ENCODE measurements at regions of chr11 and their contacts with region 1.

Region 1: GRCh38 chr11:68354148-68354872 is 41.9 kb downstream of the LRP5 start:
- DNase-seq: no peak
- H3K4me3 ChIP-seq: no peak overlapping the region
- H3K27ac ChIP-seq: peak overlapping the region; percentile 27; the same call in 1 of the 2 replicates
- H3K4me1 ChIP-seq: peaks cover 0 to 13% (median 7%) of the 10 kb centered on the region in 4 experiments; a peak in 6 of 7 replicates
- H3K27me3 ChIP-seq: no peaks in the 10 kb centered on the region
- CTCF ChIP-seq: no peak
- EP300 ChIP-seq: no peak
- POLR2A ChIP-seq: no peak
- RAD21 ChIP-seq: no peak

Region 2: DNA sequence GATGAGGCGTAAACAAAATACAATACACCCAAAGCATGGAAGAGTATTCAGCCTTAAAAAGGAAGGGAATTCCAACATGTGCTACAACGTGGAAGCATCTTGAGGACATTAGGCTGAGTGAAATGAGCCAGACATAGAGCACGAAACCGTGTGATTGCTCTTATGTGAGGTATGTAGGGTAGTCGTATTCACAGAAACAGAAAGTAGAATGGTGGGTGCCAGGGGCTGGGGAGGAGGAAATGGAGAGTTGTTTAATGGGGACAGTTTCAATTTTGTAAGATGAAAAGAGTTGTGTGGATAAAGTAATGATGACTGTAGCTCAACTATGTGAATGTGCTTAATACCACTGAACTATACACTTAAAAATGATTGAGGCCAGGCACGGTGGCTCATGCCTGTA is 131.0 kb before region 1 on chr11:
- CTCF ChIA-PET with region 1: no interaction called
- POLR2A ChIA-PET with region 1: no interaction called
- DNase-seq: no peak
- H3K4me3 ChIP-seq: no peak overlapping the region
- H3K27ac ChIP-seq: no peak overlapping the region
- H3K4me1 ChIP-seq: no peaks in the 10 kb centered on the region
- H3K27me3 ChIP-seq: peaks cover 0 to 2% (median 0%) of the 10 kb centered on the region in 4 experiments; a peak in 1 of 7 replicates
- CTCF ChIP-seq: no peak
- EP300 ChIP-seq: no peak
- POLR2A ChIP-seq: no peak
- RAD21 ChIP-seq: no peak

Region 3: DNA sequence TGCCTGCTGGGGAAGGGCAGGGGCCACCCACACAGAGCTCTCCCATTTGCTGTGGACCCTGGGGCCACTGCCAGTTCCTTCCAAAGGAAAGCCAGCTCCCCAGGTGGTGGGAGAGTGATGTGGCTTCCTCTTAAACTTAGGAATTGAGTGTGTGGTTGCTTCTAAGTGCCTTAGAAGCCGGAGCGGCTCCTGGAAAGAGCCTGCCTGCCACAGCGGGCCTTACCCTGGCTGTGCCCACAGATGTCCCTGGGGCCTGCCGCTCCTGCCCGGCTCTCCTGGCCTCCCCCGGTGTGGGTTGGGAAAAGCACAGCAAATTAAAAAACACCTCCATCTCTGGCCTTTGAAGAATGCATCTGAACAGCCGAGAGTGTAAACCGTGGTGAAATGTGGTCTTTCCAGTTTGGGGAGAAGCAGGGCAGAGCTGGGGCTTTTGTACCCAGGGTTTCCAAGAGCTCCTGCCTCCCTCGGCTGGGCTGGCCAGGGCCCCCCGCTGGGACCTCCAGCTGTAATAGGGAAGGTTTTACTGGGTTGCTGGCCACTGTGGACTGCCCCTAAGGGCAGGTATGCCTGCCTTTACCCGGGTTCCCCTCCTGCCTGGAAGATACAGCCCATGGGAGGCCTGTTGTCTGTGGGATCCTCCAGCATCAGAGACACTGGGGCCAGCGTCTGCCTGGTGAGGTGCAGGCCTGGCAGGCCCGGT is 11.7 kb before region 1 on chr11:
- CTCF ChIA-PET with region 1: interaction called, 9 read pairs
- POLR2A ChIA-PET with region 1: interaction called, 10 read pairs
- DNase-seq: peak; percentile 29 to 79
- H3K4me3 ChIP-seq: peak overlapping the region in 2 of 4 experiments; percentile 14 to 16; a peak in 1 of 8 replicates
- H3K27ac ChIP-seq: peak overlapping the region; percentile 77
- H3K4me1 ChIP-seq: peaks cover 11 to 33% (median 26%) of the 10 kb centered on the region in 4 experiments
- H3K27me3 ChIP-seq: no peaks in the 10 kb centered on the region
- CTCF ChIP-seq: no peak
- EP300 ChIP-seq: no peak
- POLR2A ChIP-seq: no peak
- RAD21 ChIP-seq: no peak

Region 4: GRCh38 chr11:68383976-68384501 is 29.7 kb after region 1 on chr11:
- CTCF ChIA-PET with region 1: interaction called, 19 read pairs
- POLR2A ChIA-PET with region 1: no interaction called
- DNase-seq: peak; percentile 33 to 98
- H3K4me3 ChIP-seq: no peak overlapping the region
- H3K27ac ChIP-seq: no peak overlapping the region
- H3K4me1 ChIP-seq: no peaks in the 10 kb centered on the region
- H3K27me3 ChIP-seq: no peaks in the 10 kb centered on the region
- CTCF ChIP-seq: peak; percentile 93 to 96 (median 93)
- EP300 ChIP-seq: no peak
- POLR2A ChIP-seq: no peak
- RAD21 ChIP-seq: peak; percentile 94 to 97

Region 5: GRCh38 chr11:68517121-68517741 is 162.9 kb after region 1 on chr11:
- CTCF ChIA-PET with region 1: no interaction called
- POLR2A ChIA-PET with region 1: no interaction called
- DNase-seq: no peak
- H3K4me3 ChIP-seq: no peak overlapping the region
- H3K27ac ChIP-seq: no peak overlapping the region
- H3K4me1 ChIP-seq: no peaks in the 10 kb centered on the region
- H3K27me3 ChIP-seq: no peaks in the 10 kb centered on the region
- CTCF ChIP-seq: no peak
- EP300 ChIP-seq: no peak
- POLR2A ChIP-seq: no peak
- RAD21 ChIP-seq: no peak